ENCODE measurements at regions of chr2 and their contacts with region 1.

Region 1: DNA sequence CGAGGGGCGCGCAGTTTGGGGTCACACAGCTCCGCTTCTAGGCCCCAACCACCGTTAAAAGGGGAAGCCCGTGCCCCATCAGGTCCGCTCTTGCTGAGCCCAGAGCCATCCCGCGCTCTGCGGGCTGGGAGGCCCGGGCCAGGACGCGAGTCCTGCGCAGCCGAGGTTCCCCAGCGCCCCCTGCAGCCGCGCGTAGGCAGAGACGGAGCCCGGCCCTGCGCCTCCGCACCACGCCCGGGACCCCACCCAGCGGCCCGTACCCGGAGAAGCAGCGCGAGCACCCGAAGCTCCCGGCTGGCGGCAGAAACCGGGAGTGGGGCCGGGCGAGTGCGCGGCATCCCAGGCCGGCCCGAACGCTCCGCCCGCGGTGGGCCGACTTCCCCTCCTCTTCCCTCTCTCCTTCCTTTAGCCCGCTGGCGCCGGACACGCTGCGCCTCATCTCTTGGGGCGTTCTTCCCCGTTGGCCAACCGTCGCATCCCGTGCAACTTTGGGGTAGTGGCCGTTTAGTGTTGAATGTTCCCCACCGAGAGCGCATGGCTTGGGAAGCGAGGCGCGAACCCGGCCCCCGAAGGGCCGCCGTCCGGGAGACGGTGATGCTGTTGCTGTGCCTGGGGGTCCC is at the start of gene ITGA4:
- DNase-seq: no peak
- ATAC-seq: peak; percentile 99
- H3K4me3 ChIP-seq: peak within 1 kb of the TSS in 1 of 3 experiments; percentile 35; a peak in 1 of 6 replicates
- H3K27ac ChIP-seq: no peak within 1 kb of the TSS
- H3K4me1 ChIP-seq: no peaks in the 10 kb centered on the region
- H3K27me3 ChIP-seq: peaks cover 0 to 20% of the 10 kb centered on the region in 2 experiments; a peak in 2 of 5 replicates
- CTCF ChIP-seq: peak; percentile 64
- EP300 ChIP-seq: no peak
- POLR2A ChIP-seq: no peak
- RAD21 ChIP-seq: peak; percentile 73
- total RNA-seq, gene ITGA4: not detected in 2 replicates

Region 2: DNA sequence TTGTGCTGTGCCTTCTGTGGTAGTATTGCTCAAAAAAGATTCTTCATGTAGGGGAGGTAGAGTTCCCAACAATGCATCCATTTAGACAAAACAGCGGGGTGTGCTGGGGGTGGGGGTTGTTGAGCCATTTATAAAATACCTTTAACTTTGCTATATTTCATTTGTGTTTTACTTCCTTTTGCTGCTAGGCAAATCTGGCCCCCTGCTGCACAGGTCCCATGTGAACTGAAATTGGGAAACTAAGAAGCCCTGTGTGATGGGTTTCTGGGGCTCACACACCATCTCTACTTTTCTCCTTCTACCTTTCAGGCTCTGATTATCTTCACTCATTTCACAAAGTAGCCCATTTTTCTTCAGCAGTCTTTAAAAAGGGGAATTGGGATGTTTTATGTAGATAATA is 52.8 kb before region 1 on chr2:
- CTCF ChIA-PET with region 1: no interaction called
- POLR2A ChIA-PET with region 1: no interaction called
- in situ Hi-C with region 1: no loop called
- intact Hi-C with region 1: loop called (anchors 2 kb)
- DNase-seq: no peak
- ATAC-seq: no peak
- H3K4me3 ChIP-seq: no peak overlapping the region
- H3K27ac ChIP-seq: no peak overlapping the region
- H3K4me1 ChIP-seq: no peaks in the 10 kb centered on the region
- H3K27me3 ChIP-seq: no peaks in the 10 kb centered on the region
- CTCF ChIP-seq: no peak
- EP300 ChIP-seq: no peak
- POLR2A ChIP-seq: no peak
- RAD21 ChIP-seq: no peak

Region 3: GRCh38 chr2:182393270-182393760 is 936.1 kb after region 1 on chr2:
- CTCF ChIA-PET with region 1: no interaction called
- POLR2A ChIA-PET with region 1: no interaction called
- in situ Hi-C with region 1: no loop called
- intact Hi-C with region 1: loop called (anchors 5 kb)
- DNase-seq: no peak
- ATAC-seq: no peak
- H3K4me3 ChIP-seq: no peak overlapping the region
- H3K27ac ChIP-seq: no peak overlapping the region
- H3K4me1 ChIP-seq: no peaks in the 10 kb centered on the region
- H3K27me3 ChIP-seq: no peaks in the 10 kb centered on the region
- CTCF ChIP-seq: no peak
- EP300 ChIP-seq: no peak
- POLR2A ChIP-seq: no peak
- RAD21 ChIP-seq: no peak

Measured in HepG2 (cell line).